PC-9 (cell line): ENCODE measurements at regions of chr9 and their contacts with region 1.

Region 1: DNA sequence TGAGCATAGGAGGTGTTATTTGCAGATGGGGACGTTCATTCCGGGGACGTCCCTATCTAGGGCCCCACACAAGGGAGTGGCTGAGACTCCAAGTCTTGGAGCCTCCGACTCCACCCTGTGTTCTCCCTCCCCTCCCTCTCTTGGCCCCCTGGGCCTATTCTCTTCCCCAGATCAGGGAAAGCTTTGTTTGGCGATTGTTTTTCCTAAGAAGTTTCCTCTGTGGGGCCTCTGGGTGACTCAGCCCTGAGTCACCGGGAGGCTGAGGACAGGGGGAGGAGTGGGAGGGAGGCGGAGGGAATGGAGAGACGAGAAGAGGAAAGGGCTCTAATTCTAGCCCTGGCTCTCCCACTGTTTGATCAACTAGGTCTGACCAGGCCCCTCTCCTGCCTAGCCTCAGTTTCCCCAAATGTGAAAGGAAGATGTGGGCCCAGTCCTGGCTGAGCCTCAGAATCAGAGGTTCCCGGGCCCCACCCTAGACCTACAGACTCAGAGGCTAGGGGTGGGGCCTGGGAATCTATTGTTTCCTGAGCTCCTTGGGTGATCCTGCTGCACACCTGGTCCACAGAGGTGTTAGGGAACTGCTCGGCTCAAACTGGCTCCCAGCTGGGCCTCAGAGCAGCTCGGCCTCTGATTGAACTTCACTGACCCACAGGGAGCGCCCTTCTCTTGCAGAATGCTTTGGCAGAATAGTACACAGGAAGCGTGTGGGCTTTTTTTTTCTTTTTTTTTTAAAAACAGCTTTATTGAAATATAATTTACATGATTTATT is 19.2 kb downstream of the GSN start:
- DNase-seq: peak; percentile 94 to 95
- H3K4me3 ChIP-seq: peak overlapping the region; percentile 35; the same call in 1 of the 2 replicates
- H3K27ac ChIP-seq: peak overlapping the region; percentile 96
- H3K4me1 ChIP-seq: peaks cover 61% of the 10 kb centered on the region
- H3K27me3 ChIP-seq: no peaks in the 10 kb centered on the region
- CTCF ChIP-seq: peak; percentile 46; the same call in 1 of the 2 replicates

Region 2: DNA sequence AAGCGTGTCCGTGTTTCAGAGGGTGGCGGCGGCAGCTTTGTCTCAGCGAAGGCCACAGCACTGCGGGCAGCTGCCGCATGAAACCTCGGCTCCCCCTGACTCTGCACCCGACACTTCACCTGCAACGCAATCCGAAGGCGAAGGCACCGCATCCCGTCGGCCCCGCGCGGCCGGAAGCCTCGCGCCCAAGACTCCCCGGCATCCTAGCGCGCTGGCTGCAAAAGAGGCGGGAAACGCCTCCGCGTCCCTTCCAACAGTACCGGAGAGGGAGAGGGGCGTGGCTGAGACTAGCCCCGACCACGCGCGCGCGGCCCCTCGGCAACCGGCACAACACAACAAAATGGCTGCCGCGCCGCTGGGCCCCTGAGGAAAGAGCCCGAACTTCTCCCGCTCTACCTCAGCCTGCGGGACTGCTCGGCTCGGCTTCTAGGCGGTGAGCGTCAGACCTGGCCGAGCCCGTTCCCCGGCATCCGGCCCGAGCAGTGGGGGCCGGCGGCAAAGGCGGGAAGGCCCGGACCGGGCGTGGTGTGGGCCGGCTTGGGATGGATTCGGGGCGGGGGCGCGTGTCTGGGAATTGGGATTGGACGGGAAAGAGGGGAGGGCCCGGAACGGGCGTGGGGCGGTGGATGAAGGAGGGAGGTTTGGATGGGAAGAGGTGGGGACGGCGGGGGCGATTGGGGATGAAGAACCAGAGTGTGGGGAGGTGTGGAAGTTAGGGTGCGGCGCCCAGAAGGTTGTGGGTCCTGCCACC is 212.3 kb before region 1 on chr9 and contains the start of gene CNTRL:
- CTCF ChIA-PET with region 1: no interaction called
- POLR2A ChIA-PET with region 1: no interaction called
- intact Hi-C with region 1: loop called (anchors 10 kb)
- DNase-seq: peak; percentile 64 to 90
- H3K4me3 ChIP-seq: peak within 1 kb of the TSS; percentile 69
- H3K27ac ChIP-seq: peak within 1 kb of the TSS; percentile 26; the same call in 1 of the 2 replicates
- H3K4me1 ChIP-seq: peaks cover 15% of the 10 kb centered on the region; the same call in 1 of the 2 replicates
- H3K27me3 ChIP-seq: no peaks in the 10 kb centered on the region
- CTCF ChIP-seq: no peak
- total RNA-seq, gene CNTRL: 41.6 and 44.9 TPM in 2 replicates

Region 3: DNA sequence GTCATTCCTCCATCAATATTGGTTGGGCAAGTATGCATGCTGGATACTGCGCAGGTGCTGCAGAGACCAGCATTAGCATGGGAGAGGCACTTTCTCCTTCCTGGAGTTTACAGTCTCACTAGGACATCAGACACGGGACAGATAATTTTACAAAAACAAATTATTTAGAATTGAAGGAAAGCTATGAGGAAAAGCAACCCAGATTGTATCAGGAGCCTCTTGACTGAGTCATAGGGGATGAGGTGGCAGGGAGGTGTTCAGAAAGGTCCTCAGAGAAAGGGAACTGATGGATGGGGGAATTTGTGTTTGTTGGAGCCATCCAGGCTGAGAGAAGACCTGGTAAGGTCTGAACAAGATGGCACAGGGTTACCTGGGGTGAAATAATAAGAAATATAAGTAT is 61.0 kb before region 1 on chr9:
- CTCF ChIA-PET with region 1: interaction called, 4 read pairs
- POLR2A ChIA-PET with region 1: interaction called, 6 read pairs
- intact Hi-C with region 1: loop called (anchors 1 kb)
- DNase-seq: peak; percentile 42 to 73
- H3K4me3 ChIP-seq: no peak overlapping the region
- H3K27ac ChIP-seq: peak overlapping the region; percentile 17
- H3K4me1 ChIP-seq: peaks cover 20% of the 10 kb centered on the region
- H3K27me3 ChIP-seq: no peaks in the 10 kb centered on the region
- CTCF ChIP-seq: no peak

Region 4: DNA sequence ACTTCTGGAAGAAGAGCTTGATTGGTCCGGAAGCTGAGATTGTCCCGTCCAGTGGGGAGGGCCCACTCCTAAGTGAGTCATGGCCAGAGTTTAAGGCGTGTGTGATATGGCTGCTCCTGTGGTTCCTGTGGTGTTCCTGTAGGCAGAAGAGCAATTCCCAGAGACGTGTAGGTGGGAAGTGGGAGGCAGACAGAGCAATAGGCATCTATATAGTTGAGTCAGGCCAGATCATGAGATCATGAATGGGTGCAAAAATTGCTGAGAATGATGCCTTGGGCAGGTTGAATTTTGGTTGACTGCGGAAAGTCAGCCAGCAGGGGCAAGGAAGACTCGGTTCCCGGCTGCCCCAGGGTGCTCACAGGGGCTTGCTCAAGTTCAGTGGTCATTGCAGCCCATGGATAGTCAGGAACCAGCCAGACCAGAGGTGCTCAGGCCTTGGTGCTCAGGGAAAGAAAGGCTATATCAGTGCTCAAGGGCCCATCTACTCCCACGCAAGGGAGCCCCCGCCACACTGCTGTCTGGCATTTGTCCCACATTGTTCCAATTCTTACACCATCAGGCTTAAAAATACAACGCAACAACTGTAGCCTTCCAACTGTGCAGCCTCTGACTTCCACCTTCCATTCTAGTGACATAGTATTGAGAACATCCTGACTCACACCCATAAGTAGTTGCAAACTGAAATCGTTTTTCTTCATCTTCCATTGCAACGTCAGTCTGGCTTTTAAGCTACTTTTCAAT is 40.2 kb before region 1 on chr9:
- CTCF ChIA-PET with region 1: no interaction called
- POLR2A ChIA-PET with region 1: no interaction called
- intact Hi-C with region 1: no loop called
- DNase-seq: no peak
- H3K4me3 ChIP-seq: no peak overlapping the region
- H3K27ac ChIP-seq: no peak overlapping the region
- H3K4me1 ChIP-seq: no peaks in the 10 kb centered on the region
- H3K27me3 ChIP-seq: no peaks in the 10 kb centered on the region
- CTCF ChIP-seq: no peak

Region 5: DNA sequence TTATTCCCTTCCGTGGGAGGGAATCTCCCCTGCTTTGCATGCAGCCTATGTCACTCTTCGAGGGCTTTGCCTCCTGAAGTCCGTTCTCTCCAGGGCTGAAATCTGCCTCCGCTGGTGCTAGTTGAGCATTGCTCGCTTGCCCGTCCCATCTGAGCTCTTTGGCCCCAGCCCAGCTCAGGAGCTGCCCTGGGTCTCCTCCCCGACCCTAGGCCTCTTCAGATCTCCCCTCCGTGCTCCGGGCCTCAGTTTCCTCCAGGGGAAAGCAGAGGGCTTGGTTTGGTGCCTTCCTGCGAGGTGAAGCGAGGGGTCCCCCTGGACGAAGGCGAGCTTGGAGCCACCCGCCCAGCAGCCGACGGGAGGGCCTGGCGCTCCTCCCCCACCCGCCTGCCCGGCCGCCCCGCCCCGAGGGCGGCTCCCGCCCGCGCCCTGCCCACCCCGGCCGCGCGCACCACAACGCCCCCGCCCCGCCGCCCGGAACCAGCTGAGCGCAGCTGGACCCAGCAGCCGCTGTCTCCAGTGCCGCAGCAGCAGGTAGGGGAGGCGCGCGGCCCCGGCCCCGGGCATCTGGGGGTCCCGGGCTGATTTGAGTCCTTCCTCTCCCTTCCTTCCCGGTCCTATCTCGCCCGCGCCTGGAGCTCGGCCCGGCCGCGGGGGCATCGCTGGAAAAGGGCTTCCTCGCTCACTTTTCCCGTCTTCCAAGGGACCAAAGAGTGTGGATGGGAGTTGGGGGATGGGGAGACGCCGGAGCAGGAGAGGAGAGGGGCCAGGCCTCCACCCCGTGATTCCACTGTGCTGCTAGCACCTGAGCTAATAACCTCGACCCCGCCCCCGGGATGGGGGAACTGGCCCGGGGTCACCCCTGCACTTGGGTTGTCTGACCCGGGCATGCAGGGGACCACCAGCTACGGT is 19.2 kb before region 1 on chr9 and contains the start of gene GSN:
- CTCF ChIA-PET with region 1: interaction called, 11 read pairs
- POLR2A ChIA-PET with region 1: no interaction called
- intact Hi-C with region 1: loop called (anchors 1 kb)
- DNase-seq: peak; percentile 34 to 74
- H3K4me3 ChIP-seq: peak within 1 kb of the TSS; percentile 93
- H3K27ac ChIP-seq: no peak within 1 kb of the TSS
- H3K4me1 ChIP-seq: peaks cover 23% of the 10 kb centered on the region
- H3K27me3 ChIP-seq: no peaks in the 10 kb centered on the region
- CTCF ChIP-seq: no peak
- total RNA-seq, gene GSN: 135 and 207 TPM in 2 replicates

Region 6: GRCh38 chr9:121399883-121400607 is 112.9 kb after region 1 on chr9:
- CTCF ChIA-PET with region 1: interaction called, 4 read pairs
- POLR2A ChIA-PET with region 1: no interaction called
- intact Hi-C with region 1: loop called (anchors 1 kb)
- DNase-seq: peak in 1 of 2 experiments; percentile 68
- H3K4me3 ChIP-seq: no peak overlapping the region
- H3K27ac ChIP-seq: no peak overlapping the region
- H3K4me1 ChIP-seq: no peaks in the 10 kb centered on the region
- H3K27me3 ChIP-seq: no peaks in the 10 kb centered on the region
- CTCF ChIP-seq: peak; percentile 80

Region 7: GRCh38 chr9:121783521-121784507 is 496.7 kb after region 1 on chr9:
- CTCF ChIA-PET with region 1: no interaction called
- POLR2A ChIA-PET with region 1: no interaction called
- intact Hi-C with region 1: no loop called
- DNase-seq: no peak
- H3K4me3 ChIP-seq: no peak overlapping the region
- H3K27ac ChIP-seq: no peak overlapping the region
- H3K4me1 ChIP-seq: no peaks in the 10 kb centered on the region
- H3K27me3 ChIP-seq: no peaks in the 10 kb centered on the region
- CTCF ChIP-seq: no peak